Natural killer cell (primary cell): ENCODE measurements at regions of chr19 and their contacts with region 1.

Region 1: DNA sequence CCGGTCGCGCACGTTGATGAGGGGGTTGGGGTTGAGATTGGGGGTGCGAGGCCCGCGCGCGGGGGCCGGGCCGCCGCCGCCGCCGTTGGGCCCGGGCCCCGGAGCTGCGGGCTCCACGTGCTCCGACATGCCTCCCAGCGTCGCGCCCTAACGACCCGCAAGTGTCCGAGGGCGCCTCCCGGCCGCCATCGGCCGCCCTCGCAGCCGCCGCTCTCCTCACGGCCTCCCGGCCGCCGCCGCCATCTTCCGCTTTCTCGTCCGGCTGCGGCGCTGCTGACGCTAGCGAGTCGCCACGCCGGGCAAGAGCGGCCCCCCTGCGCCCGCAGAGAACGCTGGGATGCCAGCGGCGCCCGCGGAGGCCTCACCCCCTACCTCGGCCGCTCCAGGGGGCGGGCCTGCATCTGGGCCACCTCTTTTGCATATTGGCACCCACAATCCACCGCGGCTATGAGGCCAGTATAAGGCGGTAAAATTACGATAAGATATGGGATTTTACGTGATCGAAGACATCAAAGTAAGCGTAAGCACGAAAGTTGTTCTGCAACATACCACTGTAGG is at the start of gene TMEM259:
- DNase-seq: peak; percentile 97 to 98
- ATAC-seq: peak; percentile 88 to 98 (median 88)
- H3K4me3 ChIP-seq: peak within 1 kb of the TSS; percentile 94
- H3K4me3 Mint-ChIP-seq: peak within 1 kb of the TSS; percentile 92
- H3K27ac ChIP-seq: peak within 1 kb of the TSS; percentile 100
- H3K27ac Mint-ChIP-seq: peak within 1 kb of the TSS; percentile 100
- H3K4me1 ChIP-seq: peaks cover 66% of the 10 kb centered on the region
- H3K4me1 Mint-ChIP-seq: peaks cover 24 to 49% of the 10 kb centered on the region in 2 donors
- H3K27me3 ChIP-seq: no peaks in the 10 kb centered on the region
- H3K27me3 Mint-ChIP-seq: peaks cover 0 to 3% of the 10 kb centered on the region in 2 donors
- CTCF ChIP-seq: no peak
- total RNA-seq, gene TMEM259: 310 to 354 (median 317) TPM

Region 2: DNA sequence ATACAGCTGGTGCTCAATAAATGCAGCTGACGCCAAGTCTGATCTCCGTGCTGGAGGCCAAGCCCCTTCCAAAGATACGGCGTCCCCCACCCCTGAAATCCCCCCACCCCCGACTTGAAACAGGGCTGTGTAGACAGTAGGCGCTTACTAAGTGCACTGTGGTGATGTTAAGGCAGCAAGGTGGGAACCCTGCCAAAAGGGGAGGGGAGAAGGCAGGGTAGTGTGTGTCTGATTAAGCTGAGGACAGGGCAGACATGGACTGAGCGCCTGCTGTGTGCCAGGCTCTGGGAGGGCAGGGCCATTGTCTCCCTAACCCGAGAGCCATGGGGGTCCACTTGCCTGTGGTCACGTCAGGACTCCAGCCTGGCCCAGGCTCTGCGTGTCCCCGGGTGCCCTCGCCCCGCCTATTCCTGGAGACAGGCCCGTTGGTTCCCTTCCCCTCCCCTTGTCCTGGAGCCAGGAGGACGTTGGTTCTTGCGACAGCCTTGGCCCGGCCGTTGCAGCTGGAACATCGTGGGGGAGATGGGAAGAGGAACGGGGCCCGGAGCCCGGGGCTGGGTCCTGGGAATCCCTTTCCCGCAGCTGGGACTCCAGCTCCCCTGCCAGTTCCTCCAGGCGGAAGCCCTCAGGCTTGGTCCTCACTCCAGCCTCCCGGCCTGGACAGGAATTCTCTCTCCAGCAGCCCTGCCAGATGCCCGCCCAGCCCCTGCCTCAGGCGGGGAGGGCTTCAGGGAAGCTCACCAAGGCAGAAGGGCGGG is 170.5 kb before region 1 on chr19:
- intact Hi-C with region 1: no loop called
- DNase-seq: no peak
- ATAC-seq: no peak
- H3K4me3 ChIP-seq: no peak overlapping the region
- H3K4me3 Mint-ChIP-seq: no peak overlapping the region
- H3K27ac ChIP-seq: no peak overlapping the region
- H3K27ac Mint-ChIP-seq: no peak overlapping the region
- H3K4me1 ChIP-seq: no peaks in the 10 kb centered on the region
- H3K4me1 Mint-ChIP-seq: no peaks in the 10 kb centered on the region
- H3K27me3 ChIP-seq: peaks cover 10% of the 10 kb centered on the region
- H3K27me3 Mint-ChIP-seq: peaks cover 6 to 14% of the 10 kb centered on the region in 2 donors
- CTCF ChIP-seq: no peak

Region 3: GRCh38 chr19:1039646-1040475 is 18.9 kb after region 1 on chr19 and contains the start of gene ABCA7:
- intact Hi-C with region 1: loop called (anchors 2 kb)
- DNase-seq: peak; percentile 99
- ATAC-seq: peak; percentile 95 to 98 (median 96)
- H3K4me3 ChIP-seq: peak within 1 kb of the TSS; percentile 83
- H3K4me3 Mint-ChIP-seq: peak within 1 kb of the TSS; percentile 98
- H3K27ac ChIP-seq: peak within 1 kb of the TSS; percentile 34
- H3K27ac Mint-ChIP-seq: peak within 1 kb of the TSS; percentile 85 to 92
- H3K4me1 ChIP-seq: peaks cover 65% of the 10 kb centered on the region
- H3K4me1 Mint-ChIP-seq: peaks cover 39 to 53% of the 10 kb centered on the region in 2 donors
- H3K27me3 ChIP-seq: no peaks in the 10 kb centered on the region
- H3K27me3 Mint-ChIP-seq: no peaks in the 10 kb centered on the region
- CTCF ChIP-seq: no peak
- total RNA-seq, gene ABCA7: 73.3 to 149 (median 121) TPM